ENCODE measurements at regions of chr1 and their contacts with region 1.

Region 1: DNA sequence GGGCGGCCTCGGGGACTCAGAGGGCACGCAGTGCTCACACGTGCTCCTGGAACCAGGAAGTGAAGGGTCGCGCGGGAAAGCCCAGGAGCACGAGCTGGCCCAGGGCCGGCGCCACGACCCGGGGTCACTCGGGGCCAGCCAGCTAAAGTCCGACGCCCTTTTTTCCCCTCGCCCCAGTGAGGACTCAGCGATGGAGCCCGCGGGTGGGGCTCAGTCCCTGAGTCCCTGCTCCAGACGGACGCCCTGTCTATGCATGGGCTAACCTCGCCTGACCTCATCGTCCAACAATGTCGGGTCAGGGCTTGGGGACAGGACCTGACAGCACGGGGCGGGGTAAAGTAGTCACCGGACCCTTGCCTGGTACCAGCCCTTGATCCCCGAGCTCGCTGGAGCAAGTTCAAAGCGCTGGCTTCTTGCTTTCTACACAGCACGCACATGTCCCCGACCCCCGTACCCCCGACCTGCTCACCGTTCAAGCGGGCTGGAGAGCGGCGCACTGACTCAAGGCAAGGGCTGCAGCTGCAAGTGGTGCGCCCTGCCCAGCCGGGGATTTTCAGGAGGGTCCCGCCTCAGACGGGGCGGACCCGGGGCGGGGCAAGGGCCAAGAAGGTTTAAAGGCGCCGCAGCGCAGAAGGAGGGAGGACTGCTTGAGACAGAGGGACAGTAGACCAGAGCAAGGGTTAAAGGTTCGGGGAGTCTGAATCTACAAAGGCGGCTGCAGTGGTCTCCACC is at the start of gene TAGLN2:
- H3K4me3 ChIP-seq: peak within 1 kb of the TSS; percentile 64
- H3K27ac ChIP-seq: peak within 1 kb of the TSS; percentile 95
- H3K4me1 ChIP-seq: peaks cover 13% of the 10 kb centered on the region
- CTCF ChIP-seq: peak; percentile 4; the same call in 1 of the 2 replicates

Region 2: GRCh38 chr1:159936273-159936904 is 11.2 kb after region 1 on chr1:
- CTCF ChIA-PET with region 1: interaction called, 7 read pairs
- POLR2A ChIA-PET with region 1: interaction called, 41 read pairs
- H3K4me3 ChIP-seq: no peak overlapping the region
- H3K27ac ChIP-seq: no peak overlapping the region
- H3K4me1 ChIP-seq: no peaks in the 10 kb centered on the region
- CTCF ChIP-seq: peak; percentile 96

Region 3: DNA sequence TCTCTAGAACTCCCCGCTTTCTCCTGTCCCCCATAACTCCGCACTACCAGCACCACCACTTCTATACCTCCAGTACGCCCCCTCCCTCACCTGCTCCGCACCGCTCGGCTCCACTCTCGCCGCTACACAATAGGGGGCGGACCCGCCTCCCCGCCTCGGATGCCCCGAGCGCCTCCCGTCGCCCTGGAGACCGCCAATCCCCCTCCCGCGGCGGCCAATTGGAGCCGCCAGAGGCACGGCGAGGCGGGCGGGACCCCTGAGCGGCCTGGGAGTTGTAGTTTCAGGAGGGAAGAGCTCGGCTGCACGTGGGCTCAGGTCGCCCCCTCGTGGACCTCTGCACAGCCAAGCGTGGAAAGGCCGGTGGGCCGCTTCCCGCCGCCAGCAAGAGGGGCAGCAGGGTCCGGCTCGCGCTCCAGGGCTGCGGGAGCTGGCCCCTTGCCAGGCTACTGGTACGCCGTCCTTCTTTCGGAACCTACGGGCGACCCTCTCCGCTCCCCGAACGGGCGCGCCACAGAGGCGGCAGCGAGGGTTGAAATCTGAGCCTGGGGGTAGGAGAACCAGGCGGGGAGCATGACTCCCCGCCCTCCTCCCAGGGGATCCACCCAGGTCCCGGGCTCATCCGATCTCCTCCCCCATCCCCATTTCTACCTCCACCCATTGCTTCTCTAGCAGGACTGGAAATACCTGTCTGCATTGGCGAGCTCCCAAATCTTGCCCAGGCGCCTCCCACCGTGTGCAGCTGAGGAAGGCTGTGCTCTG is 20.5 kb after region 1 on chr1 and contains the start of gene IGSF9:
- CTCF ChIA-PET with region 1: interaction called, 3 read pairs
- POLR2A ChIA-PET with region 1: interaction called, 25 read pairs
- H3K4me3 ChIP-seq: peak within 1 kb of the TSS; percentile 45
- H3K27ac ChIP-seq: no peak within 1 kb of the TSS; the same call in 1 of the 2 replicates
- H3K4me1 ChIP-seq: no peaks in the 10 kb centered on the region
- CTCF ChIP-seq: peak; percentile 99

Region 4: DNA sequence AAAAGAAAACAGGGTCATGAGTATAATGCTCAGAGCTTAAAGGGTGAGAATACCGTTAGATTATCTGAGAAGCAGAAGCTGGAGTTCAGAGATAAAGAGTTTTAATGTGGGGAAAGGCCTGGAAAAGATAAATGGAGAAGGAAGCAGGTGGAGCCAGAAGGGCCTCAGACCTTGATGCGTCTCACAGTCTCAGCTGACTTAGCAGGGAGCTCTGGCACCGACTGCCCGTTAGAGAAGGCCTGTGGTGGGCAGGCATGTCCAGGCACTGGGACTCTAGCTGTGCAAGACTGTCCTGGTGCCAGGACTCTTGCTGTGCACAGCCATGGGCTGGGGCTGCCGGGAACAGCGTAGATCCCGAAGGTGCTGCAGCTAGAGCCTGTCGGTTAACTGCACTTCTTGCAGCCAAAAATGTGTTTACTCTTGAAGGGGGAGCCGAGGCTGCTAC is 32.7 kb after region 1 on chr1:
- CTCF ChIA-PET with region 1: no interaction called
- POLR2A ChIA-PET with region 1: no interaction called
- H3K4me3 ChIP-seq: no peak overlapping the region
- H3K27ac ChIP-seq: no peak overlapping the region
- H3K4me1 ChIP-seq: no peaks in the 10 kb centered on the region
- CTCF ChIP-seq: no peak

Region 5: DNA sequence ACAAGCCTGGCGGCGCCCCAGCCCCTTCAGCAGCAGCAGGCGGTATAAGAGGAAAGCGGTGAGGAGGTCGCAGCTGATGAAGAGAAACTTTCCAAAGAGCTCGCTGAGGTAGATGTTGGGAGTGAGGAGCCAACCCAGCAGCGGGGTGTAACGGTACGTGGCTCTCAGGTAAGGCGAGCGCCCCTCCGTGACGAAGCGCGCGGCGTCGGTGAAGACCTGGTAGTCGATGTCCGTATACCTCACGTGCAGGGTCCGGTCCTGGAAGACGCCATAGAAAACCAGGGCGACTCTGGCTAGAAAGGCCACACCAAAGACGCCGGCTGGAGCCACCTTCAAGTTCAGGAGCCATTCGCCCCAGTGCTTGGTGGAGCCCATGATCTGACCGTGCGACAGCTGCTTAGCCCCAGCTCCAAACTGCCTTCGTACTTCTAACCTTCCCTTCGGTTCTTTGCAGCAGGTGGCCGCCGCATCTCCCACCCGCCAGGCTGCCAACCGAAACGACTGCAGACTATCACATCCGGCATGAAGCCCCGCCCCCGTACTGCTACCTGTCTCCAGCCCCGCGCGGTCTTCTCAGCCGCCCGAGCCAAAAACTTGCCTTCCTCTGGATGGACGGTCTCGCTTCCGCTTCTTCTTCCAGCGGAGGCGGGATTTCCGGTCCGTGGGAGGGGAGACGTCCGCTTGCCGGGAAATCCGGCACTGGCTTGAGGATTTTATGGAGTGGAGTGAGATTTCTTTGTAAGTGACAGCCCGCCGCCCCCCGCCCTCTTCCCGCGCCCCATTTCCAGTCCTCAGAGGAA is 106.4 kb after region 1 on chr1 and contains the start of gene PIGM:
- CTCF ChIA-PET with region 1: no interaction called
- POLR2A ChIA-PET with region 1: interaction called, 22 read pairs
- H3K4me3 ChIP-seq: peak within 1 kb of the TSS; percentile 82
- H3K27ac ChIP-seq: peak within 1 kb of the TSS; percentile 72
- H3K4me1 ChIP-seq: peaks cover 17% of the 10 kb centered on the region; the same call in 1 of the 2 replicates
- CTCF ChIP-seq: 0 out of 2 replicates have a peak, but pooled peaks have one; percentile 23

Region 6: GRCh38 chr1:160058087-160058486 is 132.9 kb after region 1 on chr1:
- CTCF ChIA-PET with region 1: no interaction called
- POLR2A ChIA-PET with region 1: no interaction called
- H3K4me3 ChIP-seq: no peak overlapping the region
- H3K27ac ChIP-seq: no peak overlapping the region
- H3K4me1 ChIP-seq: no peaks in the 10 kb centered on the region
- CTCF ChIP-seq: 0 out of 2 replicates have a peak, but pooled peaks have one; percentile 14

Measured in HEK293 (cell line).